A549 (cell line): ENCODE measurements at regions of chr17 and their contacts with region 1.

Region 1: DNA sequence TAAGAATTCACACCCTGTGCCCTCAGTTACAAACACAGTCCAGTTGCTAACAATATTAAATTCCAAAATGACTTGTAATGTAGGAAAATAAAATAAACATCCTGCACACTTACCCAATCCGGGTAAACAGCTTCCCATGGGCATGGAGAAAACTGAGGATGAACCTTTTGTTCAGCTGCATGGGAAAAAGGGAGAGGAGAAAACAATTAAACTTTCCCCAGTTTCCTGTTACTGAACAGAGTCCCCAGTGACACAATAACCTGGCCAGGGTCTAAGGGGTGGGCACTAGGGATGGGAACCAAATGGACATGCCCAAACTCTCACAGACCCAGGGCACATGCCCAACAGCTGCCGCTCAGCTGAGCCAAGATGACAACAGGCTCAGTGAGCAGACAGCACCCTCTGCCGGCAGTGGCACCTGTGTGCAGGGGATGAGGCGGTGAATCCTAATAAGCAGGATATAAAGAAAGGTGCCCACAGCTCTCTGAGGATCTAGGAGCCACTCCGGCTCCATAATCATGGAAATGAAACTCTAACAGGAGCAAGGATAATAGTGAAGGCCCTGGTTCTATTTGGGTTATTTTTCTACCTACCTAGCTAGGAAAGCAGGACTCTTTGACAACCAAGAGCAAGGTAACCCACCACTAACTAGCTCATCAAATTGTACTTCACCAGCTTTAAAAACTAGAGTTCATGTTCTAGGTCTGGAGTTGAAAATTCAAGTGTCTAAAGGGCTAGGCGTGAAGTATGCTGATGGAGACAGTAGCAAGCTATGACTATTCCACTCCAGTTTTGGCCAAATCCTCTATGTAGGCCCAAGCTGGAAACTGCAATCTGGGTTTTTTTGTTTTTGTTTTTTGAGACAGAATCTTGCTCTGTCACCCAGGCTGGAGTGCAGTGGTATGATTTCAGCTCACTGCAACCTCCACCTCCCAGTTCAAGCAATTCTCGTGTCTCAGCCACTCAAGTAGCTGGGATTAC is 58.8 kb downstream of the SMG6 start:
- DNase-seq: peak; percentile 84 to 94
- ATAC-seq: peak; percentile 98 to 99
- H3K4me3 ChIP-seq: no peak overlapping the region
- H3K27ac ChIP-seq: no peak overlapping the region
- H3K4me1 ChIP-seq: peaks cover 16% of the 10 kb centered on the region
- CTCF ChIP-seq: peak; percentile 99
- EP300 ChIP-seq: no peak; a peak in 1 of 5 replicates
- POLR2A ChIP-seq: no peak
- RAD21 ChIP-seq: peak; percentile 98 to 99

Region 2: GRCh38 chr17:1908699-1909309 is 336.0 kb before region 1 on chr17:
- CTCF ChIA-PET with region 1: interaction called, 11 read pairs
- POLR2A ChIA-PET with region 1: no interaction called
- DNase-seq: peak; percentile 81 to 85
- ATAC-seq: peak; percentile 88 to 96
- H3K4me3 ChIP-seq: no peak overlapping the region
- H3K27ac ChIP-seq: peak overlapping the region in 1 of 2 experiments; percentile 33; a peak in 1 of 6 replicates
- H3K4me1 ChIP-seq: peaks cover 9% of the 10 kb centered on the region; the same call in 1 of the 3 replicates
- CTCF ChIP-seq: peak; percentile 95
- EP300 ChIP-seq: no peak
- POLR2A ChIP-seq: no peak
- RAD21 ChIP-seq: peak; percentile 97

Region 3: DNA sequence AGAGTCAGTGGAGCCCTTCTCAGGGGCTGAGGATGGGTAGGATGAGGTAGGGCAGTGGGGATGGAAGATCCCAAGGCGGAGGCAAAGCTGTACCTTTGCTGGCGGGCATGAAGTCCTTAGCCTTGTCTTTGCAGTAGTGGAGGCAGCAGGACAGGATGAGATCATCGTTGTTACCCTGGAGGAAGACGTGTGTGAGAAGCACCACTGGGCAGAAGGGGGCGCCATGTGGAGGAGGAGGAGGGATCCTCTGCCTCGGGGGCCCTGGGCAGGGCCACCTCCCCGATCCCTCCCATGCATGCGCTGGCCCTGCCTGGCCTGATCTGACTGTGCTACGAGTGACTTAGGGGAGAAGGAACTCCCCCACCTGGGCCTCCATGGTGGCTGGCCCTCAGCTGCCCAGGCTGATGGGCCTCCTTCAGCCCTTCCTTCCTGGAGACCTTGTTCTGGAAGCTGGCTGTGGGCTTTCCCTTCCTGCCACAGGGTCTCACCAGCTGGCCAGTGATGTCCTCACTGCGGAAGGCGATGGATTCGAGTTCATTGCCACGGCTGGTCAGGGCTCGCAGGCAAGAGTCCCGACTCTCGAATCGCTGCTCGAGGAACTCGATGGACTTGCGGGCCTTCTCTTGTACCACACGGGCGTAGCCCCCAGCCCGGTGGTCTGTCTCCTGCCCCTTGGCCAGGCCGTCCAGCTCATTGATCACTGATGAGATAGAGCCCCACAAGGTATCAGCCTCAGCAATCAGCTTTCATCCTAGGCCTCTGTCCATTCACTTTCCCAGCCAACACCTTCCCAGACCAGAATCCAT is 179.7 kb before region 1 on chr17:
- CTCF ChIA-PET with region 1: interaction called, 492 read pairs
- POLR2A ChIA-PET with region 1: no interaction called
- DNase-seq: peak in 1 of 2 experiments; percentile 59
- ATAC-seq: peak; percentile 57 to 82; a peak in 5 of 6 replicates
- H3K4me3 ChIP-seq: no peak overlapping the region
- H3K27ac ChIP-seq: no peak overlapping the region
- H3K4me1 ChIP-seq: no peaks in the 10 kb centered on the region
- CTCF ChIP-seq: peak; percentile 43
- EP300 ChIP-seq: no peak
- POLR2A ChIP-seq: no peak
- RAD21 ChIP-seq: 0 out of 5 replicates have a peak, but pooled peaks of 1 of the 2 experiments have one; percentile 13

Region 4: DNA sequence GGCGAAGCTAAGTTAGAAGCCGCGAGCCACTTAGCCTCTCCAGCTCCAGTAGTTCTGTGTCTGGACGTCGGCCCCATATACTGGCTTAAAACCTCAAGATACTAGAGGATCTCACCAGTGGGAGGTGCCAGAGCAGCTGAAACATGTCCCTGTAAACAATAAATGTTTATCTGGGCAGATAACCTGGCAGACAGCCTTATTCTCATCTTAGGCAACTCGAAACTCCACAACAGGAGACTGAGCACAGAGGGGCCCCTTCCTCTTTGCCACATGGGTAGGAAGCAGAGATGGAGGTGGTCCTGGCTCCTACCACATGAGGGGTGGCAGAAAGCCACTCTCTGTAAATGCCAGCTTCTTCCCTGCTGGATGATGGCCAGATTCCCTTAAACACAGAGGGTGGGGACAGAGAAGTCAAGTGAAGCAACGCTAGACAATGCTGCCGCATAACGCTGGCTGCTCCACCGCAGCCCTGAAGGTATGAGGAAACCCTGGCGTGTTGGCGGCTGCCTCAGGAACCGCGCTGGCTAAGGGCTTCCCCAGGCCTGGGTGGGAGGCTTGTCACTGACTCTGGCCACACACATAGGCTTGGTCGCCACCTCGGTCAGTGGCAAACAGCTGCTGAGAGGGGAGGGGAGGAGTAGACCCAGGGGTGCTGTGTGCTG is 122.1 kb before region 1 on chr17:
- CTCF ChIA-PET with region 1: interaction called, 13 read pairs
- POLR2A ChIA-PET with region 1: no interaction called
- DNase-seq: no peak
- ATAC-seq: peak; percentile 32 to 58; a peak in 4 of 6 replicates
- H3K4me3 ChIP-seq: no peak overlapping the region
- H3K27ac ChIP-seq: no peak overlapping the region
- H3K4me1 ChIP-seq: peaks cover 4% of the 10 kb centered on the region; the same call in 2 of the 3 replicates
- CTCF ChIP-seq: no peak
- EP300 ChIP-seq: no peak
- POLR2A ChIP-seq: no peak
- RAD21 ChIP-seq: no peak

Region 5: DNA sequence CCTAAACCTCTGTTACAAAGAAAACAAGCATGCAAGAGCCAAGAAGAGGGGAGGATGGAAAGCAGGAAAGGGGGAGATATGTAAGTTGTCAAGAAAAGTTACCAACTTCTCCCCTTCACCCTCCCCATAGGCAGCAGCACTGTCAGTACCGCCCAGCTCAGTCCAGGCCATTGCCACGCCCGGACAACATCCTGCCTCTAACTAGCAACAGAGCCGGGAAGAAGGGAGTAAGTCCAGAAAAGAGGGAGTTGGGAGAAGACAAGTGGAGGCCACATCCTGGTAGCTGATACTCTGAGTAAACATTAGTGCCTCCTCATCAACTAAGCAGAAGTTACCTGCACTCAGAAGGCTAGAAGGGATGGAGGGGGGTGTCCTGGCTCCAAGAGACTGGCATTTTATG is 54.8 kb before region 1 on chr17:
- CTCF ChIA-PET with region 1: interaction called, 28 read pairs
- POLR2A ChIA-PET with region 1: no interaction called
- DNase-seq: peak in 1 of 2 experiments; percentile 25
- ATAC-seq: 0 out of 6 replicates have a peak, but pooled peaks of 1 of the 2 experiments have one; percentile 6
- H3K4me3 ChIP-seq: no peak overlapping the region
- H3K27ac ChIP-seq: peak overlapping the region; percentile 14 to 80; a peak in 4 of 6 replicates
- H3K4me1 ChIP-seq: peaks cover 38% of the 10 kb centered on the region
- CTCF ChIP-seq: no peak
- EP300 ChIP-seq: no peak
- POLR2A ChIP-seq: no peak
- RAD21 ChIP-seq: no peak

Region 6: DNA sequence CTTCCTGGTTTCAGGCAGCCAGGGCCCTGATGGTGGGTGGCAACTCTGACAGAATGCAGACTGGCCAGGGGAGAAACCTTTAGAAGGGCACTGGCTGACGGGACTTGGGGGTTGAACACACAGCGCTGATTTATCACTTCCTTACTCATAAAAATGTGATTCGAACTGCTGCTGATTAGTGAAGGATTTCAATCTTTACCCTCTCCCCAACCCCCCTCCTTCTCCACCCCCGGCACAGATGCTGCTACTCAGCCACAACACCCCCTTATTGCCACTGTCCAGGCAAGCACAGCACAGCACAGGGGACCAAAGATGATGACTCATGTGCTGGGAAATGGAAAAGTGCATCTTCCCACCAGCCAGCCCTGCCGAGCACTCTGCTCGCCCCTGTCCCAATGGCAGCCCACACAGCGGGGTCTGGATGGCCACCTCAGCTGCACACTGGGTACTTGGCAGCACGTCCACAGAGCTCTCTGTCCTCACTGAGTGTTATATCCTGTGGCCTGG is 11.3 kb before region 1 on chr17:
- CTCF ChIA-PET with region 1: interaction called, 42 read pairs
- POLR2A ChIA-PET with region 1: no interaction called
- DNase-seq: no peak
- ATAC-seq: no peak
- H3K4me3 ChIP-seq: no peak overlapping the region
- H3K27ac ChIP-seq: no peak overlapping the region
- H3K4me1 ChIP-seq: no peaks in the 10 kb centered on the region
- CTCF ChIP-seq: no peak
- EP300 ChIP-seq: no peak
- POLR2A ChIP-seq: no peak
- RAD21 ChIP-seq: no peak

Region 7: DNA sequence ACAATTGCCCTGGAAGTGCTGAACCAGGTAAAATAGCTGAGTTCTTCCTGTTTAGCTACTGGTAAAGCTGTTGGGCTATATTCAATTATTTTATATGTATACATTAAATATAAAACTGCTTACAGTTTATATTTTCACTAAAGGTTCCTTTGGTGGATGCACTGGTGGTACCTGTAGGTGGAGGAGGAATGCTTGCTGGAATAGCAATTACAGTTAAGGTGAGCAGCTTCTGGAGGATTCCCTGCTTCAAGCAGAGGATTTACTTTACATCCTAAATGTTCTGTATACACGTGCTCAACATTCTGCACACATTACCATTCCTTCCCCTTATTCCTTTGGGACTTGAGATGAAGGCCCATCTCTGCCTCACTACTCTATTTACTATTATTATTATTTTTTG is 76.6 kb after region 1 on chr17:
- CTCF ChIA-PET with region 1: no interaction called
- POLR2A ChIA-PET with region 1: no interaction called
- DNase-seq: no peak
- ATAC-seq: no peak
- H3K4me3 ChIP-seq: no peak overlapping the region
- H3K27ac ChIP-seq: no peak overlapping the region
- H3K4me1 ChIP-seq: no peaks in the 10 kb centered on the region
- CTCF ChIP-seq: no peak
- EP300 ChIP-seq: no peak
- POLR2A ChIP-seq: no peak
- RAD21 ChIP-seq: no peak